ENCODE measurements at regions of chr3 and their contacts with region 1.

Region 1: DNA sequence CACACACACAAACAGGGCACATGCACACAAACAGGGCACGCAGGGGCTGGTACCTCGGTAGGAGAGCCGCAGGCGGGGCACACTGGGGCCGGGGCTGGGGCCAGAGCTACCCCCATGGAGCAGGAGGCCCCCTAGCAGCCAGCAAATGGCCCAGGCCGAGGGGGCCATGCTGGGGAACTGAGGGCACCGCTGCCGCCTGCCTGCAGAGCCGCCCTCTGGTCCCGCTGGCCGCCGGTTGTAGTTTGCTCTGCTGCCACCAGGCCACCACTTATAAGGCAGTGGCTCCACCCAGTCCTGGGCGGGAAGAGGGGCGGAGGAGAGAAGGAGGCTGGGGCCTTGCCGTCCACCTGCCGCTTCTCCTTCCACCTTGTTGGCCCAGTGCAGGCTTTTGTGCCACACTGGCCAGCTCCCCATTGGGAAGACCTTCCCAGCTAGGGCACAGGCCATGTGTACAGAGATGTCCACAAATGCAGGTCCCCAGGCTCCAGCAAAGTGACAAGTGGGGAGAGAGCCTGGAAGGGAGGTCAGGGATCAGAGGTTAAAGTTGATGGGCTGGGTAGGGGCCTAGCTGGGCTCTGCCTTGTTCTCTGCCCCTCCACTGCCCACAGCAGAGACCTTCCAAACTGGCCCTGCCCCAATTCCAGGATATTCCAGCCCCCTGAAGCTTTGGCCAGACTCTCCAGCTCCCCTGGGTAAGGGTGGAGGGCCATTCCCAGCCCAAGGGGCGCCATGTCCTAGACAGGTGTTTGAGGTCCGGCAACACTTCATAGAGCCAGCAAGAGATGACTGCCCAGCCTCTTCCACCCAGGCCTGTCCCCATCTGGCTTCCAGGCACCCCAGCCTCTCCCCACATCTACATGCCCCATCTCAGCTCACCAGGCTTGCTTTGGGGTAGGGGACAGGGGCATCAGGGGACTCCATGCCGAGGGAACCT is at the start of gene SEMA3G:
- DNase-seq: peak; percentile 54 to 80 (median 61)
- ATAC-seq: peak; percentile 95 to 97
- H3K4me3 Mint-ChIP-seq: no peak within 1 kb of the TSS
- H3K27ac Mint-ChIP-seq: peak within 1 kb of the TSS in 2 of 10 donors; percentile 56 to 65
- H3K4me1 Mint-ChIP-seq: peaks cover 7 to 14% (median 9%) of the 10 kb centered on the region in 4 donors
- H3K27me3 Mint-ChIP-seq: no peaks in the 10 kb centered on the region
- polyA plus RNA-seq, gene SEMA3G: not detected

Region 2: GRCh38 chr3:52090131-52090932 is 354.8 kb before region 1 on chr3:
- POLR2A ChIA-PET with region 1: no interaction called
- DNase-seq: no peak
- ATAC-seq: no peak
- H3K4me3 Mint-ChIP-seq: no peak overlapping the region
- H3K27ac Mint-ChIP-seq: no peak overlapping the region
- H3K4me1 Mint-ChIP-seq: peaks cover 17 to 25% (median 24%) of the 10 kb centered on the region in 4 donors
- H3K27me3 Mint-ChIP-seq: no peaks in the 10 kb centered on the region

Region 3: GRCh38 chr3:52407779-52408178 is 37.3 kb before region 1 on chr3:
- POLR2A ChIA-PET with region 1: interaction called, 14 read pairs
- DNase-seq: peak in 1 of 10 donors; percentile 54
- ATAC-seq: no peak
- H3K4me3 Mint-ChIP-seq: peak overlapping the region in 9 of 10 donors; percentile 2 to 94 (median 91)
- H3K27ac Mint-ChIP-seq: peak overlapping the region in 9 of 10 donors; percentile 76 to 99 (median 96)
- H3K4me1 Mint-ChIP-seq: peaks cover 19 to 41% (median 37%) of the 10 kb centered on the region in 4 donors
- H3K27me3 Mint-ChIP-seq: no peaks in the 10 kb centered on the region

Region 4: GRCh38 chr3:52428151-52429005 is 16.7 kb before region 1 on chr3:
- POLR2A ChIA-PET with region 1: no interaction called
- DNase-seq: peak in 5 of 10 donors; percentile 28 to 65 (median 41)
- ATAC-seq: peak; percentile 67 to 70
- H3K4me3 Mint-ChIP-seq: no peak overlapping the region
- H3K27ac Mint-ChIP-seq: peak overlapping the region in 3 of 10 donors; percentile 12 to 75 (median 31)
- H3K4me1 Mint-ChIP-seq: peaks cover 0 to 3% (median 0%) of the 10 kb centered on the region in 4 donors
- H3K27me3 Mint-ChIP-seq: peaks cover 0 to 1% (median 0%) of the 10 kb centered on the region in 5 donors

Region 5: DNA sequence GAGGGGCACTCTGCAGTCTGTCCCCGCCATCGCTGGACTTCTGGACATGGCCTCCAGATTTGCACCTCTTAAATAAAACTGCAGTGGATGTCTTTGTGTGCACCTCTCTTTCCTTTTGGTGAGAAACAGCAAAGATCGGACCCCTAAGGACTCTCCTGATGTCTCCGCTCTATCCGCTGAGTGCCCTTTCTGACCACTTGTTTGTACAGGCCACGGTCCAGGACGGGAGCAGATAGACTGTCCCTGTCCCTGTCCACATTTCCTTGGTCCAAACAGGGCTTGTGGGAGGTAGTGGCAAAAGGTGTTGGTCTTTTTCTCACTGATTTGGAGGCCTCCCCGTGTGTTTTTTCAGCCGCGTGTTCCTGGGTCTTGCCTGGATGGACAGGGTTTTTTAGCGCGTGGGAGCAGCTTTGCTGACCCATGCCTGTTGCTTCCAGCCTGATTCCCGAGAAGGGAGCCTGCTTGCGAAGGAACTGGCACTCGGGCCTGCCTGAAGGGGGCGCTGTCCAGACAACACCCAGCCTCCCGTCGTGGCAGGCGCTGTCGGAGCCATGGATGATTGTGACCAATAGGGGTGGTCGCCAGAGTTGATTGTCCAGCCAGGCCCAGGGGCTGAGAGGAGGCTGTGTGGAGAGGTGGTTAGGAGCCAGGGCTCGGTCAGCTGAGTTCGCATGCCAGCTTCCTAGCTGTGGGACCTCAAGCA is 36.8 kb after region 1 on chr3:
- POLR2A ChIA-PET with region 1: no interaction called
- DNase-seq: peak in 2 of 10 donors; percentile 16 to 26
- ATAC-seq: no peak
- H3K4me3 Mint-ChIP-seq: no peak overlapping the region
- H3K27ac Mint-ChIP-seq: peak overlapping the region in 1 of 10 donors; percentile 84
- H3K4me1 Mint-ChIP-seq: no peaks in the 10 kb centered on the region
- H3K27me3 Mint-ChIP-seq: no peaks in the 10 kb centered on the region

Region 6: GRCh38 chr3:52494446-52494845 is 49.3 kb after region 1 on chr3:
- POLR2A ChIA-PET with region 1: no interaction called
- DNase-seq: no peak
- ATAC-seq: no peak
- H3K4me3 Mint-ChIP-seq: peak overlapping the region in 4 of 10 donors; percentile 26 to 58 (median 32)
- H3K27ac Mint-ChIP-seq: peak overlapping the region in 5 of 10 donors; percentile 16 to 92 (median 69)
- H3K4me1 Mint-ChIP-seq: peaks cover 4 to 17% (median 9%) of the 10 kb centered on the region in 4 donors
- H3K27me3 Mint-ChIP-seq: peaks cover 0 to 2% (median 0%) of the 10 kb centered on the region in 5 donors

Measured in naive thymus-derived CD8-positive, alpha-beta T cell (primary cell).